ENCODE measurements at regions of chr2 and their contacts with region 1.

Region 1: GRCh38 chr2:149017116-149017985 is 21.1 kb upstream of the LYPD6B start:
- DNase-seq: peak; percentile 78 to 87
- H3K4me3 ChIP-seq: no peak overlapping the region
- H3K27ac ChIP-seq: no peak overlapping the region
- H3K4me1 ChIP-seq: no peaks in the 10 kb centered on the region
- H3K27me3 ChIP-seq: no peaks in the 10 kb centered on the region
- CTCF ChIP-seq: peak; percentile 64 to 90 (median 74)
- POLR2A ChIP-seq: no peak

Region 2: DNA sequence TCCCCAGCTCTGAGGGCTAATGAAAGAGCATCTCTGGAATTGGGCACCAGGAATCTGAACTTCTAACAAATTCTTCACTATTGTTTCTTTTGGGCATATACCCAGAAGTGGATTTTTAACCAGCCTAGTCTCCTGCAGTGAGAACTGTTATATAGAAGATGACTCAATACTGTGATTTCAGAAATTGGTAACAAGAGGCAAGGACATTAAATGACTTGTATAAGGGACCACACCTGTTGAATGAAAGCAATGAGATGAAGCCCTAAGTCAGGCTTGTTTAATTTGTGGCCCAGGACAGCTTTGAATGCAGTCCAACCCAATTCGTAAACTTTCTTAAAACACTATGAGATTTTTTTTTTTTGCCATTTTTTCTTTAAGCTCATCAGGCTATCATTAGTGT is 314.9 kb before region 1 on chr2:
- intact Hi-C with region 1: no loop called
- DNase-seq: no peak
- H3K4me3 ChIP-seq: no peak overlapping the region
- H3K27ac ChIP-seq: no peak overlapping the region
- H3K4me1 ChIP-seq: no peaks in the 10 kb centered on the region
- H3K27me3 ChIP-seq: no peaks in the 10 kb centered on the region
- CTCF ChIP-seq: no peak
- POLR2A ChIP-seq: no peak

Region 3: DNA sequence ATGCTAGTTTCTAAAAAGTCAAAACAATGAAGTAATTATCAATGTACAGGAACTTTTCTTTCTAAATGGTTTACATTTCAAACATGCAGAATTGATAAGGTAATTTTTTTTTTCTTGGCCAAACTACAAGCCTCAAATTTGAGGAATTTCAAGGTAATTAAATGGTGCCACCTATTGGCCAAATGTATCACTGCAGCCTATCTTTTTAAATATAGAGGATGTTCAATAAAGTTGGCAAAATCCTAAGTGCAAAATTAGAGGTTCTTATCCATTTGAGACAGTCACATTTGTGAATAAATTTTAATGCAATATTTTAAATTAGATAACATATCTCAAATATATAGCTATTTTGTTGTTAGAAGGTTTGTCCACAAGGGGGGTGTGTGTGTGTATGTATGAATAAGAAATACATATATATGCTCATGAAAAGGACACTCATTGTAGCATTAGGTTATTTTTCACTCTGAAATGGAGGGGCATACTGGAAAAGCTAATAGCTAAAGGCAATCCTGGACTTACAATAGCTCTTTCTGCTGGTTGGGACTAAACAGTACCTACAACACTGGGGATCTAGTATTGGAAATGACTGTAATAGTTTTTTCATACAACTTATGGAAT is 544.1 kb after region 1 on chr2:
- intact Hi-C with region 1: loop called (anchors 5 kb)
- DNase-seq: no peak
- H3K4me3 ChIP-seq: no peak overlapping the region
- H3K27ac ChIP-seq: no peak overlapping the region
- H3K4me1 ChIP-seq: peaks cover 0 to 8% of the 10 kb centered on the region in 2 donors
- H3K27me3 ChIP-seq: no peaks in the 10 kb centered on the region
- CTCF ChIP-seq: peak; percentile 39 to 93 (median 78)
- POLR2A ChIP-seq: no peak